ENCODE measurements at regions of chr9 and their contacts with region 1.

Region 1: GRCh38 chr9:7982907-7983306 is 183.3 kb upstream of the DMAC1 start:
- DNase-seq: no peak
- H3K4me3 ChIP-seq: peak overlapping the region in 16 of 59 donors; percentile 1 to 42 (median 24)
- H3K27ac ChIP-seq: peak overlapping the region; percentile 59 to 99 (median 93)
- H3K27me3 ChIP-seq: no peaks in the 10 kb centered on the region
- CTCF ChIP-seq: no peak

Region 2: GRCh38 chr9:7910426-7911020 is 72.4 kb before region 1 on chr9:
- intact Hi-C with region 1: loop called (anchors 5 kb)
- DNase-seq: peak in 4 of 10 donors; percentile 33 to 49 (median 41)
- H3K4me3 ChIP-seq: no peak overlapping the region
- H3K27ac ChIP-seq: peak overlapping the region in 43 of 59 donors; percentile 7 to 81 (median 55)
- H3K27me3 ChIP-seq: no peaks in the 10 kb centered on the region
- CTCF ChIP-seq: peak in 2 of 56 donors; percentile 8 to 25

Region 3: GRCh38 chr9:8011974-8012373 is 29.1 kb after region 1 on chr9:
- intact Hi-C with region 1: no loop called
- DNase-seq: no peak
- H3K4me3 ChIP-seq: no peak overlapping the region
- H3K27ac ChIP-seq: no peak overlapping the region
- H3K27me3 ChIP-seq: no peaks in the 10 kb centered on the region
- CTCF ChIP-seq: no peak

Region 4: DNA sequence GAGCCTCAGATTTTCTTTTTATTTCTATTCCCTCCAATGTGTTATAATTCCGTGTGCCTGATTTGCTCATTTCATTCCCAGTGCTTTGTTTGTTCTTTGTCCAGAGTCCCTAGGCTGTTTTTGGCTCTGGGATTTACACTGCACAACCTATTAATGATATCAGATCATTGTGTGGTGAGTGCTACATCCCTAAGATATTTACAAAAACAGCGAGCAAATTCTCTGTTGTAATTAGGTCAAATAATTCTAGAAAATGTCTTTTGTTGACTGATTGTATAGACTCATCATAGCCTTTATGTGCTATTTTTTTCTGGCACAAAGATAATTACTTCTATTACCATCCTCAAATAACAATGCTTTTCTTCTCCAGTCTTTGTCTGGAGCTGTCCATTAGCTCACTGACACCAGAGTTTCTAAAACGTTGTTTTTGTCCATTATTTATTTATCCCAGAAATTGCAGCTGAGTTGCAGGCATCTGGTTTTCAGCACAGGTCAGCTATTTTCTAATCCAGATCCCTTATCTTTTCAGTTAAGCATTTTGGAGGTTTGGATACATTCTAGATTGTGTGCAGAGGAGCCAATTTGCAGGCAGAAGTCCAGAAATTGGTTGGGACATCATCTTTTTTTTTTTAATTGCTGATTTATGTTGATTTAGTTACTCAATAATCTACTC is 196.6 kb after region 1 on chr9:
- intact Hi-C with region 1: loop called in 1 of 2 experiments (anchors 5 kb)
- DNase-seq: no peak
- H3K4me3 ChIP-seq: peak overlapping the region in 8 of 59 donors; percentile 5 to 39 (median 20)
- H3K27ac ChIP-seq: peak overlapping the region in 58 of 59 donors; percentile 6 to 90 (median 78)
- H3K27me3 ChIP-seq: no peaks in the 10 kb centered on the region
- CTCF ChIP-seq: peak in 1 of 56 donors; percentile 15